ENCODE measurements at regions of chr17 and their contacts with region 1.

Region 1: GRCh38 chr17:50361561-50362480 is 11.2 kb downstream of the MRPL27 start:
- H3K4me3 ChIP-seq: no peak overlapping the region
- H3K27ac ChIP-seq: no peak overlapping the region
- H3K4me1 ChIP-seq: 0 out of 2 replicates have a peak, but pooled peaks cover 5% of the 10 kb centered on the region
- CTCF ChIP-seq: peak; percentile 72

Region 2: DNA sequence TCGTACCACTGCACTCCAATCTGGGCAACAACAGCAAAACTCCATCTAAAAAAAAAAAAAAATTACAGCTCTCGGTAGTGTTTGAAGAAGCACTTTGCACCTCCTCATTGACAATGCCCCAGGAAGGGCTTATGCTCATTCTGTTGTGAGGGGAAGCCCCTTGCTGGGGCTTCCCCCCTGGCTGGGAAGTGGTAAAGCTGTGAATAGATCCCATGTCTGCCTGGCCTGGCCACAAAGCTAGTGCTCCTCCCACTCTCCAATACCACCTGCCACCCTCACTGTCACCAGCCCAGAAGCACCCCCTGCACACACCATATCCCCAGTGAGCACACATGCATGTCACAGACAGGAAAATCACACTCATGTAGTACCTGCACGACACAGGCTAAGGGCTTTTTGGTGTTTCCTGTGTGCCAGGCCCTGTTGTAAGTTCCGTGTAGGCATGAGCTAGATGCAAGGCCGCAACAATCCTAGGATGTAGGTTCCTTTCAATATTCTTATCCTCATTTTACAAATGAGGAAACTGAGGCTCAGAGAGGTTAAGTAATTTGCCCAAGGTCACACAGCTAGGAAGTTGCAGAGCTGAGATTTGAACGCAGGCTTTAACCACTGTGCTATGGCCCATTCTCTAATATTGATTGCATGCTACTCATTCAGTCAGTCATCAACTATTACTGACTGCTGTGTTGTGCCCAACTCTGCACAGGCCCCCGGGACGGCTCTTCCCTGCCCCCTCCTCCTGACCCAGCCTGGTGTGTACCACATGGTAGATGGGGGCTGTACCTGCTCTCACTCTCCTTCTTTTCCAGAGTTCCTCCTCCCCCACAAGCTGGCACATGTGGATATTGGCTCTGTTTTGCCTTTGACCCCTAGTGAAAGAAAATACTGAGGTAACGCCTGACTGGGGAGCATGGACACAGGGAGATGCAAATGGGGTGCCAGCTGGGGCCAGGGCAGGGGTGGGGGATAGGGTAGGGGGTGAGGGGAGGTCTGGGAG is 148.5 kb before region 1 on chr17:
- CTCF ChIA-PET with region 1: no interaction called
- POLR2A ChIA-PET with region 1: no interaction called
- H3K4me3 ChIP-seq: no peak overlapping the region
- H3K27ac ChIP-seq: no peak overlapping the region
- H3K4me1 ChIP-seq: peaks cover 6% of the 10 kb centered on the region; the same call in 1 of the 2 replicates
- CTCF ChIP-seq: peak; percentile 44; the same call in 1 of the 2 replicates

Region 3: DNA sequence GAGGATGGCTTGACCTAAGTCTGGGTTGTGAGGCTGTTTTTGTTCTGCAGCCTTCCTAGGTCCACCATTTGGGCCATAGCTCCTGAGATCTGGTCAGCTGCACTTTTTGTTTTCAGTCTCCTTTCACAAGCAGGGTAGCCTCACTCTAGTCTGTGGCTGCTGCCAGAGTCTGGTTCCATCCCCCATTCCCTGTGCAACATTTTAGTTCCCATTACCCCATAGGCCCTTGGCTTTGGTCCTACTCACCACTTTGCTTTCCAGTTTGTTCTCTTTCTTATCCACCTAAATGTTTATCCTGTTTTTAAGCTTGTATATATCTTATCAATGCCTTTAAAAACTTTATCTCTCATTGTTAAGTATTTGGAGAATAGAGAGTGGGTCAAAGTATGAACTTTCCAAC is 22.4 kb before region 1 on chr17:
- CTCF ChIA-PET with region 1: interaction called, 10 read pairs
- POLR2A ChIA-PET with region 1: no interaction called
- H3K4me3 ChIP-seq: no peak overlapping the region
- H3K27ac ChIP-seq: no peak overlapping the region
- H3K4me1 ChIP-seq: no peaks in the 10 kb centered on the region
- CTCF ChIP-seq: no peak

Region 4: DNA sequence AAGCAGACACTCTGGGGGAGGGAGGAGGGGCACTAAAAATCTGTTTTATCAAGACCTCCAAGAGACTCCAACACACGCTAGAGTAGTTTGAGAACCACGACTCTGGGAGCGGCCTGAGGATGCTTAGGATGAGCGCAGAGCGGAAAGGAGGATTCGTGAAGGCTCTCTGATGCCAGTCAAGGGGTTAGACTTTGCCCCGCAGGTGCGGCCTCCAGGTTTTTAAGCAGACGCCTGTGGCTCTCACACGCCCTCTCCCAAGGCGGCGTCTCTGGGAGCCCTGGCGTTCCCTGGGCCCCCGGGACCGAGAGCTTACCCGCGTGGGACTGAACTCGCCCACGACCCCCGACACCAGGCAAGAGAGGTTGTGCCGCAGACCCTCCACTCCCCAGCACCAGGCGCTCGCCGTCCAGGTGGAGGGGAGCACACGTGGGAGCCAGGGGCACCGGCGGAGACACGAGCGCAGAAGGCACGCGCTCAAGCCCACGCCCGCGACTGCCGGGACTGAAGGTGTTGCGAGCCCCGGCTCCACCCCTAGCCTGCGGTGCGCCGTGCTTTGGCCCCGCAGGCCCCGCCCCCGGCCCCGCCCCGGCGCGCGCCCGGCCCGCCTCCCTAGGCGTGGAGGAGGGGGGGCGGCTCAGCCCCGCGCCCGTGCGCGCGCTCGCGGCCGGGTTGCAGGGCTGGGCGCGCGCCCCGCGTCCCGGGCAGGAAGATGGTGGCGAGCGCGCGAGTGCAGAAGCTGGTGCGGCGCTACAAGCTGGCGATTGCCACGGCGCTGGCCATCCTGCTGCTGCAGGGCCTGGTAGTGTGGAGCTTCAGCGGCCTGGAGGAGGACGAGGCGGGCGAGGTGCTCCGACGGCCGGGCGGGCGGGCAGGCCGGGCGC is 16.1 kb before region 1 on chr17 and contains the start of gene XYLT2:
- CTCF ChIA-PET with region 1: interaction called, 39 read pairs
- POLR2A ChIA-PET with region 1: interaction called, 10 read pairs
- H3K4me3 ChIP-seq: peak within 1 kb of the TSS; percentile 88
- H3K27ac ChIP-seq: peak within 1 kb of the TSS; percentile 83; the same call in 1 of the 2 replicates
- H3K4me1 ChIP-seq: peaks cover 11% of the 10 kb centered on the region
- CTCF ChIP-seq: no peak

Region 5: GRCh38 chr17:50372758-50373556 is 11.1 kb after region 1 on chr17 and contains the starts of genes EME1 and MRPL27:
- CTCF ChIA-PET with region 1: interaction called, 17 read pairs
- POLR2A ChIA-PET with region 1: interaction called, 15 read pairs
- H3K4me3 ChIP-seq: peak within 1 kb of the TSS; percentile 97
- H3K27ac ChIP-seq: peak within 1 kb of the TSS; percentile 86
- H3K4me1 ChIP-seq: peaks cover 8% of the 10 kb centered on the region
- CTCF ChIP-seq: no peak

Region 6: DNA sequence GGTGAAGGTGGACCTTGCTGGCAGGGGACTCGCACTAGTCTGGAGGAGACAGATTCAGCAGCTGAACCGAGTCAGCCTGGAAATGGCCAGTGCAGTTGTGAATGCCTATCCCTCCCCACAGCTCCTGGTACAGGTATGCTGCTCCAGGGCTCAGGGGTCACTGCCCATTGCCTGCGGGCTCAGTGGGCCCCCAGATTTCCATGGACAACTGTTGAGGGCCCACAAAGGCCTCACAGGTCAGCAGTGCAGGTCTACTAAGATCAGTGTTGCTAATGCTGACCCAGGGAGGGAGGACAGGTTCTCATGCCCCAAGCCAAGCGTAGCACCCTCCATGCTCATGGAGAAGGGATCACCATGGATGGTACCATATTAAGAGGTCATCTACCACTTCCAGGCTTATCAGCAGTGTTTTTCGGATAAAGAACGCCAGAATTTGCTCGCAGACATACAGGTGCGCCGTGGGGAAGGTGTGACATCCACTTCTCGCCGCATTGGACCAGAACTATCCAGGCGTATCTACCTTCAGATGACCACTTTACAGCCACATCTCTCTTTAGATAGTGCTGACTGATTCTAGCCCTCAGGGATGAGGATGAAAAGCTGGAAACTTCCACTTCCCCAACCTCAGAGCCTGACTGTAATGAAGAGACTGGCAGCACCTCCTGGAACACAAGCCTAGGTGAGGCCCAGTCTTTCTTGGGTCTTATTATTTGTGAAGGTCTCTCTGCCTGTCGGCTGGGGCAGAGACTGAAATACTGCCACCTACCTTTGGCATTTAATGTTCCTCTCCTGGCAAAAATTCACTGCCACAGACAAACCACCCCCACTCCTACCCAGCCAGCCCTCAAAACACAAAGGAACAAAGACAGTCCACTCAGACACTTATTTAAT is 18.8 kb after region 1 on chr17:
- CTCF ChIA-PET with region 1: interaction called, 13 read pairs
- POLR2A ChIA-PET with region 1: interaction called, 15 read pairs
- H3K4me3 ChIP-seq: no peak overlapping the region
- H3K27ac ChIP-seq: no peak overlapping the region
- H3K4me1 ChIP-seq: no peaks in the 10 kb centered on the region
- CTCF ChIP-seq: no peak

Region 7: GRCh38 chr17:50386510-50386909 is 24.7 kb after region 1 on chr17:
- CTCF ChIA-PET with region 1: interaction called, 13 read pairs
- POLR2A ChIA-PET with region 1: interaction called, 4 read pairs
- H3K4me3 ChIP-seq: no peak overlapping the region
- H3K27ac ChIP-seq: peak overlapping the region; percentile 2; the same call in 1 of the 2 replicates
- H3K4me1 ChIP-seq: no peaks in the 10 kb centered on the region
- CTCF ChIP-seq: no peak

Region 8: DNA sequence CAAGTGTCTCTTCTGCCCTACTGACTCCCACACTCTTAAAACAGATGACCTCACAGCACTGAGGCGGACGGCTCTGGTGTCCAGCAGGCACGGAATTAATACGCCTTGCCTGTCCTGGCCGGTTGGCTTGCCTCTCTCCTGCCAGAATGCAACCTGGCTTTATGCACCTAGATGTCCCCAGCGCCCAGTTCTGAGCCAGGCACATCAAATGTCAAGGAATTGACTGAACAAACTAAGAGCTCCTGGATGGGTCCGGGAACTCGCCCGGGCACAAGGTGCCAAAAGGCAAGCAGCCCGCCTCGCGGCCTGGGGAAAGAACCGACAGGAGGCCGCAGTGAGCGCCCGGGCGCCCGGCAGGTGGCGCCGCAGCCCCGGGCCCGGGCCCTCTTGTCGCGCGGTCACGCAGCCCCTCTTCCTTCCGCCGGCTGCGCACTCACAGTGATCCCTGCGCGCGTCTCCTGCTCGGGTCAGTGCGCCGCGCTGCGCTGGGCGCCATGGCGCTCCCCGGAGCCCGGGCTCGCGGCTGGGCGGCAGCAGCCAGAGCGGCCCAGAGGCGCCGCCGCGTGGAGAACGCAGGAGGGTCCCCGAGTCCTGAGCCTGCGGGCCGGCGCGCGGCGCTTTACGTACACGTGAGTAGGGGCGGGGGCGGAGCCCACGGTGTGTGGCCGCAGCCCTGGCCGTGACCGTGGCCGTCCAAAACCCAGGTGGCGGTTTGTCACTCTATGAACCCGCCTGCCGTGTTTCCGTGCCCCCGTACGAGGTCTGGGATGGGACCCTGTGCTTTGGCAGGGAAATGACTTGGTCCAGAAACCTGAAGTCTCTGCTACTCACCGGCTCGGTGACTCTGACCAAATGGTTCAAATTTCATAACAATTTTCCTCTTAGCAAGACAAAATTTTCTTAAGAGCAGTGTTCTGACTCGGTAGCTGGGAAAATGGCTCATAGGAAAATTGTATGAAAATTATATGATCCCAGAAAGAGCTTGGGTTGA is 116.9 kb after region 1 on chr17 and contains the start of gene RSAD1:
- CTCF ChIA-PET with region 1: interaction called, 52 read pairs
- POLR2A ChIA-PET with region 1: interaction called, 9 read pairs
- H3K4me3 ChIP-seq: peak within 1 kb of the TSS; percentile 64
- H3K27ac ChIP-seq: peak within 1 kb of the TSS; percentile 88
- H3K4me1 ChIP-seq: peaks cover 6% of the 10 kb centered on the region
- CTCF ChIP-seq: peak; percentile 83; the same call in 1 of the 2 replicates